Endothelial cell of umbilical vein (primary cell): ENCODE measurements at regions of chr4 and their contacts with region 1.

Region 1: GRCh38 chr4:109702950-109703663 is at the start of gene CASP6:
- DNase-seq: peak; percentile 80
- H3K4me3 ChIP-seq: peak within 1 kb of the TSS; percentile 81 to 93 (median 83)
- H3K27ac ChIP-seq: peak within 1 kb of the TSS; percentile 72
- H3K4me1 ChIP-seq: peaks cover 14% of the 10 kb centered on the region
- H3K27me3 ChIP-seq: no peaks in the 10 kb centered on the region
- CTCF ChIP-seq: peak; percentile 69 to 81
- POLR2A ChIP-seq: peak; percentile 67
- total RNA-seq, gene CASP6: 35.4 and 37.0 TPM in 2 replicates

Region 2: DNA sequence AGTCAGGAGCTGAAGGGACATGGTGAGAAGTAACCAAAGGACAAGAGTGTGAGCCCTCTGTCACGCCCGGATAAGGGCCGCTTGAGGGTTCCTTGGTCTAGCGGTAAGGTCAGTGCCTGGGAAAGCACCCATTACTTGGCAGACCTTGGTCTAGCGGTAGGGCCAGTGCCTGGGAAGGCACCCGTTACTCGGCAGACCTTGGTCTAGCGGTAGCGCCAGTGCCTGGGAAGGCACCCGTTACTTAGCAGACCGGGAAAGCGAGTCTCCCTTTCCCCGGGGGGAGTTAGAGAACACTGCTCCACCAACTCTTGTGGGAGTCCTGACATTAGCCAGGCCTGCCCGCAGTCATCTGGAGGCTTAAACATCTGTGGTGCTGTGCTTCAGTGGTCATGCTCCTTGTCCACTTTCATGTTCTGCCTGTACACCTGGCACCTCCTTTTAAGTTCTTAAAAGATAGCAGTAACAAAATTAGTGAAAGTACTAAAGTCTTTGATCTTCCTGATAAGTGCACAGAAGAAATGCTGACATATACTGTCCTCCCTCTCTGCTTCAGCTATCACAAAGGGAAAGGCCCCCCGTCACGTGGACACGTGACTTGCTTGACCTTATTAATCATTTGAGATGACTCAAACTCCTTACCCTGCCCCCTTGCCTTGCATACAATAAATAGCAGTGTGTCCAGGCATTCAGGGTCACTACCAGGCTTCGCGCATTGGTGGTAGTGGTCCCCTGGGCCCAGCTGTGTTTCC is 278.8 kb before region 1 on chr4:
- CTCF ChIA-PET with region 1: interaction called, 16 read pairs
- POLR2A ChIA-PET with region 1: no interaction called
- dilution Hi-C with region 1: no loop called
- intact Hi-C with region 1: loop called (anchors 1 kb)
- DNase-seq: no peak
- H3K4me3 ChIP-seq: no peak overlapping the region
- H3K27ac ChIP-seq: no peak overlapping the region
- H3K4me1 ChIP-seq: peaks cover 14% of the 10 kb centered on the region
- H3K27me3 ChIP-seq: no peaks in the 10 kb centered on the region
- CTCF ChIP-seq: no peak
- POLR2A ChIP-seq: no peak

Region 3: DNA sequence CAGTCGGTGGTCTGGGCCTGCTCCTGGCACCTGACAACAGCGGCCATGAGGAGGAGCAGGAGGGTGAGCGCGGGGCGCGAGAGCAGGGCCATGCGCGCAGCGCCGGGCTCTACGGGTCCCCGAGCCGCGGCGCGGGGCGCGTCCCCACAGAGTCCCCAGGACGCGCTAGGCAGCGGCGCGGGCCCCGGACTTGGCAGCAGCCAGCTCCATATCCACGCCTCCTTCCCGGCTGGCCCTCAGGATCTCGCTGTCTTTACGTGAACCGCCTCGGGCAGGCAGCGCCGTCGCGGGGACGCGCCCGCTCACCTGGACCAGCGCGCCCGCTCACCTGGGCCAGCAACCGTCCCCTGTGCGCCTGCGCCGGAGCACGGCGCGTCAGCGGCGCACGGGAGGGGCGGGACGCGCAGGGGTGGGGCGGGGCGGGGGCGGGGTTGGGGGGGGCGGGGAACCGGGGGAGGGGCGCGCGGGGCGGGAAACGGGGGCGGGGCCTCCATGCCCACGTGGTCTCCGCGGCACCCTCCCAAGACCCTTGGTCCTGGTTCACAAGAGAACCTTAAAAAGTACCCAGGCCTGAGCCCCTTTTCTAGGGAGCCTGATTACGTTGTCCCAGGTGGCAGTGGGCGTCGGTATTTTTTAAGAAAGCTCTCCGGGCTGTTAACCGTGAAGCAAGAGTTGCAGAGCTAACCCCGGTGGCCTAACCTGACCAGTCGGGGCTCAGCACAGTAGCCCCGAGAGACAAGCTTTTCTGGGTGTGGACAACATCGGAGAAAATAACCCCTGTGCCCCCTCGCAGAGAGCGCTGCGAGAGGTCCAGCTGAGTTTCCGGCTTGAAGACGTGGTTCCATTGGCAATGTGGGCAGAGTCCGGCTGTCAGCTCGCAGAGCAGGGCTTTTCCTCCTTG is 26.9 kb after region 1 on chr4 and contains the start of gene PLA2G12A:
- CTCF ChIA-PET with region 1: interaction called, 4 read pairs
- POLR2A ChIA-PET with region 1: interaction called, 3 read pairs
- dilution Hi-C with region 1: no loop called
- intact Hi-C with region 1: loop called (anchors 1 kb)
- DNase-seq: peak; percentile 75
- H3K4me3 ChIP-seq: peak within 1 kb of the TSS; percentile 86 to 92 (median 86)
- H3K27ac ChIP-seq: peak within 1 kb of the TSS; percentile 48
- H3K4me1 ChIP-seq: peaks cover 9% of the 10 kb centered on the region
- H3K27me3 ChIP-seq: no peaks in the 10 kb centered on the region
- CTCF ChIP-seq: no peak
- POLR2A ChIP-seq: no peak
- total RNA-seq, gene PLA2G12A: 16.6 and 21.6 TPM in 2 replicates

Region 4: GRCh38 chr4:109803924-109804571 is 100.9 kb after region 1 on chr4:
- CTCF ChIA-PET with region 1: interaction called, 5 read pairs
- POLR2A ChIA-PET with region 1: no interaction called
- dilution Hi-C with region 1: no loop called
- intact Hi-C with region 1: loop called (anchors 1 kb)
- DNase-seq: peak; percentile 56
- H3K4me3 ChIP-seq: no peak overlapping the region
- H3K27ac ChIP-seq: no peak overlapping the region
- H3K4me1 ChIP-seq: peaks cover 12% of the 10 kb centered on the region
- H3K27me3 ChIP-seq: no peaks in the 10 kb centered on the region
- CTCF ChIP-seq: peak; percentile 27 to 34
- POLR2A ChIP-seq: no peak

Region 5: GRCh38 chr4:109815151-109816081 is 112.3 kb after region 1 on chr4 and contains the start of gene GAR1:
- CTCF ChIA-PET with region 1: interaction called, 3 read pairs
- POLR2A ChIA-PET with region 1: interaction called, 3 read pairs
- dilution Hi-C with region 1: no loop called
- intact Hi-C with region 1: loop called (anchors 1 kb)
- DNase-seq: peak; percentile 94
- H3K4me3 ChIP-seq: peak within 1 kb of the TSS; percentile 35 to 92 (median 70)
- H3K27ac ChIP-seq: peak within 1 kb of the TSS; percentile 67
- H3K4me1 ChIP-seq: peaks cover 13% of the 10 kb centered on the region
- H3K27me3 ChIP-seq: no peaks in the 10 kb centered on the region
- CTCF ChIP-seq: no peak
- POLR2A ChIP-seq: peak; percentile 52
- total RNA-seq, gene GAR1: 27.7 and 29.1 TPM in 2 replicates

Region 6: GRCh38 chr4:109826719-109827118 is 123.6 kb after region 1 on chr4:
- CTCF ChIA-PET with region 1: interaction called, 15 read pairs
- POLR2A ChIA-PET with region 1: no interaction called
- dilution Hi-C with region 1: no loop called
- intact Hi-C with region 1: loop called (anchors 1 kb)
- DNase-seq: peak; percentile 38
- H3K4me3 ChIP-seq: no peak overlapping the region
- H3K27ac ChIP-seq: no peak overlapping the region
- H3K4me1 ChIP-seq: no peaks in the 10 kb centered on the region
- H3K27me3 ChIP-seq: no peaks in the 10 kb centered on the region
- CTCF ChIP-seq: peak; percentile 14 to 28
- POLR2A ChIP-seq: no peak

Region 7: GRCh38 chr4:109977854-109978501 is 274.9 kb after region 1 on chr4:
- CTCF ChIA-PET with region 1: interaction called, 12 read pairs
- POLR2A ChIA-PET with region 1: no interaction called
- dilution Hi-C with region 1: no loop called
- intact Hi-C with region 1: loop called (anchors 1 kb)
- DNase-seq: peak; percentile 51
- H3K4me3 ChIP-seq: no peak overlapping the region
- H3K27ac ChIP-seq: no peak overlapping the region
- H3K4me1 ChIP-seq: no peaks in the 10 kb centered on the region
- H3K27me3 ChIP-seq: peaks cover 17 to 20% of the 10 kb centered on the region in 2 experiments
- CTCF ChIP-seq: peak; percentile 34 to 43
- POLR2A ChIP-seq: no peak